PC-9 (cell line): ENCODE measurements at regions of chr1 and their contacts with region 1.

Region 1: GRCh38 chr1:161367684-161368400 is at the start of gene CFAP126:
- DNase-seq: peak; percentile 58 to 61
- H3K4me3 ChIP-seq: no peak within 1 kb of the TSS
- H3K27ac ChIP-seq: no peak within 1 kb of the TSS
- H3K4me1 ChIP-seq: no peaks in the 10 kb centered on the region
- H3K27me3 ChIP-seq: no peaks in the 10 kb centered on the region
- CTCF ChIP-seq: no peak
- total RNA-seq, gene CFAP126: 1.5 TPM in 1 of 2 replicates, not detected in the other

Region 2: DNA sequence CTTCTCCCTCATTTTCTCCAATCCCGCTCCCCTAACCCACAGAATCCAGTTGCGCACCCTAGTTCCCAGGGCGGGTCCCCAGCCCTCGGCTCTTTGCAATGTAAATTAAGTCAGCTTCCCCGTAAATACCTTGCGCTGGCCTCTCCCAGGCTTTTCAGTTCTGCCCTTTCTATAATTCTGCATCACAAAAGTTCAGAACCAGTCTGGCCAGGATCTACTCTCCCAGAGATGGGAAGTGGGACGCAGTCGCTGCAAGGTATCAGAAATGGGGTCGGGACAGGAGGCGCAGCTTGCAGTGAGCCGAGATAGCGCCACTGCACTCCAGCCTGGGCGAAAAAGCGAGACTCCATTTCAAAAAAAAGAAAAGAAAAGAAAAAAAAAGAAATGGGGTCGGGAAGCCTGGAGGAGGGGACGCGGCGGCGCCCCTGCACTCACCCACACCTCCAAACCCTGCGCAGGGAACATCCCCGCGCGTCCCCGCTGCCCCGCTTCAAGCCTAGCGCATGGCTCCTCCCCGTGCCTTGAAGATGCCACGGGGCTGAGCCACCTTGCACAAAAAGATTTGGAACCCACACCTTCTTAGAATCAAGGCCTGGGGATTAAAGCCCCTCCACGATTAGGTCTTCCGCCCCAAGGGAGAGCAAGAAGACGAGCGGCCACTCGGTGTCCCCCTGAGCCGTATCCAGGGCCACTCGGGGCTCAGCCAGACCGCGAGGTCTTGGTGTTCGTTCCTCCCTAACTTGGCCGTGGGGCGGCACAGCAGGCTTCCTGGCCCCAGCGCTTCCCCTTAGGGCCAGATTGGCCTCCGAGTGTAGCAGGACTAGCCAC is 386.0 kb before region 1 on chr1:
- CTCF ChIA-PET with region 1: no interaction called
- POLR2A ChIA-PET with region 1: interaction called, 30 read pairs
- intact Hi-C with region 1: no loop called
- DNase-seq: no peak
- H3K4me3 ChIP-seq: no peak overlapping the region
- H3K27ac ChIP-seq: no peak overlapping the region
- H3K4me1 ChIP-seq: no peaks in the 10 kb centered on the region
- H3K27me3 ChIP-seq: no peaks in the 10 kb centered on the region
- CTCF ChIP-seq: no peak

Region 3: DNA sequence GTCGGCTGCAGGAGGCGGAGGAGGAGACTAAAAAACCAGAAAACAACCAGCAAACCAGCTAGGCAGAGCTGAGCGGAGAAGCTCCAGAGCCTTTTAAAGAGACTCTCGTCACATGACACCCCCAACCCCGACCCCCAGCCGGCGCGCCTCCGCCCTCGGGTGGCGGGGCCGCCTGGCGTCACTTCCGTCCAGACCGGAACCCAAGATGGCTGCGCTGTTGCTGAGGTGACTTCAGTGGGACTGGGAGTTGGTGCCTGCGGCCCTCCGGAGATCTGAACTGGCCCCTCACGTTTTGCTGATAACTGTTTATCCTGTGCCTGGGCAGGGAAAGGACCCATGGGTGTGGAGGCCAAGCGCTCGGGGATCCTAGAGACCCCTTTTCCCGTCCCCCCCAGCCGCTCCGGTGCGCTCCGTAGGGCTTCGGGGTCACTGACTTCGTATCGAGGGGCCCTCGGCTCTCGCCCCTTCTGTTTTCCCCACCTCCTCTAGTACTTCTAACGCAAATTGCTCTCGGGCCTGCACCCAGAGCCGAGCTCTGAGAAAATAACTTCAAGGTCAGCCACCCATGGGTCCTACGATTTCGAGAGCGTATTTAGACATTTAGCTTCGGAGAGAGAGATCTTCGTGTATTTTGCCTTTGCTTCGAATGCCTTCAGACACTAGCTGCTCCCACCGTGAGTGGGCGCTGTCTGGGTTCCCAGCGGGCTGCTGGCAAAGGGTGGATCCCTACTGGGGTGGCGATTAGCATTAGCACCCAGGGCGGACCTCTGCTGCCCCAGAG is 53.5 kb before region 1 on chr1 and contains the start of gene SDHC:
- CTCF ChIA-PET with region 1: interaction called, 4 read pairs
- POLR2A ChIA-PET with region 1: no interaction called
- intact Hi-C with region 1: loop called (anchors 5 kb)
- DNase-seq: peak; percentile 71 to 83
- H3K4me3 ChIP-seq: peak within 1 kb of the TSS; percentile 74
- H3K27ac ChIP-seq: peak within 1 kb of the TSS; percentile 58
- H3K4me1 ChIP-seq: peaks cover 11% of the 10 kb centered on the region
- H3K27me3 ChIP-seq: no peaks in the 10 kb centered on the region
- CTCF ChIP-seq: peak; percentile 47; the same call in 1 of the 2 replicates
- total RNA-seq, gene SDHC: 215 and 216 TPM in 2 replicates